Spleen (tissue), 13 donors: ENCODE measurements at regions of chr16 and their contacts with region 1.

Region 1: DNA sequence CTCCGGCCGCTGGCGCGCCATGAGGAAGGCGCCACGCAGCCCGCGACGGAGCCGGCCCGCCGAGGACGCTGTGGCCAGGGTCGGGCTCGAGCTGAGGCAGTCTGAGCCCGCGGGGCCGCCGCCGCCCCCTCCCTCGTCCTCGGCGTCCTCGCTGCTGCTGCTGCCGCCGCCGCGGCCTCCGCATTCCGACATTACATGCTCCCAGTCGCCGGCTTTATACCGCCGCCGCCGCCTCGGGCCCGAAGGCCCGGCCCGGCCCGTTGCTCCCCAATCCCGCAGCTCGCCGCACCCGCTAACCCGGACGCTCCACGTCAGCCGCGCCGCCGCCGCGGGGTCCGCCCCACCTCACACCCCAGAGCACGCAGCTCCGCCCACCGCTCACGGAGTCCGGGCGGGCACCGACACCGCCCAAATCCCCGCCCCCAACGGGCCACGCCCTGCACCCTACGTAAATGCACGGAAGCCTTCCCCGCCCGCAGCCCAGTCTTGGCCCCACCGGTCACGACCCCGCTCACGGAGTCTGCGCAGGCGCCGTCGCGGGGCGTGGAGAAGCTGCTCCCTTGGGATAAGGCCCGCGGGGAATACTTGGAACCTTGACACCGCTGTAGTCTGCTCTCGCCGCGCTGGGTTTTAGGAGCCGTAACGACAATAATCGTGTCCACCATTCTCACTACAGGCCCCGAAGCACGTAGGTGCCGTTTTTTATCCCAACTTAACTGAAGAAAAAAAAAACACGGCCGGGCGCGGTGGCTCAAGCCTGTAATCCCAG is at the start of gene TXNDC11:
- DNase-seq: peak; percentile 100
- H3K4me3 ChIP-seq: peak within 1 kb of the TSS; percentile 62 to 90 (median 87)
- H3K27ac ChIP-seq: peak within 1 kb of the TSS; percentile 96 to 99 (median 98)
- H3K4me1 ChIP-seq: peaks cover 21 to 58% (median 51%) of the 10 kb centered on the region in 6 donors
- H3K27me3 ChIP-seq: no peaks in the 10 kb centered on the region
- CTCF ChIP-seq: peak in 1 of 11 experiments; percentile 11
- POLR2A ChIP-seq: peak; percentile 63 to 95 (median 63)
- total RNA-seq, gene TXNDC11: 42.7 to 104 (median 64.0) TPM

Region 2: DNA sequence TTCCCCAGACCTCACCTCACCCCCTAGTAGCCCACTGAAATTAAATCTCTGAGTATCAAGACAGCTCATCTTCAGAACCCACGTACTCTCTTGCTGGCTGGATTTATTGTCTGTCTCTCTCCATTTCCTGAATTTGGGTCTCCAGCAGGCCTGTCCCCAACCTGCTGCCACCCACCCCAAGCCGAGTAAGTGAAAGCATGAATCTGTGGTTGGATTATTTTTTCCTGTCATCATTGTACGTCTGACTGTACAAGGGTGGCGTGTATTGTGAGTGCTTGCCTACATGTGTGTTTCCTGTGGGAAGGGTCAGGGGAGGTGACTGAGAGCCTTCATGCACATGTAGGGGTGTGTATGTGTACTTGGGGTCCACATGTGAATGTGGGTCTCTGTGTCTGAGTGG is 479.0 kb before region 1 on chr16:
- intact Hi-C with region 1: no loop called
- DNase-seq: no peak
- H3K4me3 ChIP-seq: no peak overlapping the region
- H3K27ac ChIP-seq: peak overlapping the region in 1 of 8 donors; percentile 30
- H3K4me1 ChIP-seq: peaks cover 8 to 28% (median 15%) of the 10 kb centered on the region in 6 donors
- H3K27me3 ChIP-seq: no peaks in the 10 kb centered on the region
- CTCF ChIP-seq: no peak
- POLR2A ChIP-seq: no peak

Region 3: DNA sequence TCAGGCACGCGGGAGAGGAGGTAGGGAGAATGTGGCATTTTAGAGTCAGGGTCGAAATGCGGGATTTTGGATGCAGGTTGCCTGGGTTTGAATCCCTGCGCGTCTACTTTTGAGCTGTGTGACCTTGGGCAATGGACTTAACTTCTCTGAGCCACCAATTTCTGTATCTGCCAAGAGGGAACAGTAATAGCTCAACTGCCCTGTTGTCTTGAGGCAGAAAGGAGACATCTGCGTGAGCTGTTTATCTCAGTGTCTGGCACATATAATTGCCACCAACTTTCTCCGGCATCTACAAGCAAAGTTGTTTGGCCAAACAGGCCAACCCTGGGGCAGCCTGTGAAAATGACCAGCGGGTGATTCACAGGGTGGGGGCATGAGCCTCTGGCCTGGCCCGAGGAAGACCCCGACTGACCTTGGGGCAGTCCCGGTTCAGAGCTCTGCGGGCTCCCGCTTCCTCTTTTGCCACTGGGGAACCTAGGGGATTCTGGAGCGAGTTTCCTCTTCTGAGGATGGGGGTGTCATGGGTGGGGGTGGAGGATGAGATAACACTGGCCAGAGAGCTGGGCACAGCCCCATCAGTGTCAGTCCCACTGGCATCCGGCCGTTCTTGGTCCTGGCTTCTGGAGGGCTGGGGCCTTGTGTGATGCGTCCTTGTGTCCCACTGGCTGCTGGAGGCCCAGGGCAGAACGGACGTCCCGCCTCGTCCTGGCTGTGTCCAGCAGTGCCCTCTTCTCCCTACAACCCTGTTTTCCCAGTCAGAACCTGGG is 73.2 kb before region 1 on chr16:
- intact Hi-C with region 1: no loop called
- DNase-seq: peak; percentile 91
- H3K4me3 ChIP-seq: peak overlapping the region; percentile 64 to 96 (median 84)
- H3K27ac ChIP-seq: peak overlapping the region; percentile 78 to 93 (median 90)
- H3K4me1 ChIP-seq: peaks cover 56 to 94% (median 77%) of the 10 kb centered on the region in 6 donors
- H3K27me3 ChIP-seq: no peaks in the 10 kb centered on the region
- CTCF ChIP-seq: no peak
- POLR2A ChIP-seq: no peak

Region 4: DNA sequence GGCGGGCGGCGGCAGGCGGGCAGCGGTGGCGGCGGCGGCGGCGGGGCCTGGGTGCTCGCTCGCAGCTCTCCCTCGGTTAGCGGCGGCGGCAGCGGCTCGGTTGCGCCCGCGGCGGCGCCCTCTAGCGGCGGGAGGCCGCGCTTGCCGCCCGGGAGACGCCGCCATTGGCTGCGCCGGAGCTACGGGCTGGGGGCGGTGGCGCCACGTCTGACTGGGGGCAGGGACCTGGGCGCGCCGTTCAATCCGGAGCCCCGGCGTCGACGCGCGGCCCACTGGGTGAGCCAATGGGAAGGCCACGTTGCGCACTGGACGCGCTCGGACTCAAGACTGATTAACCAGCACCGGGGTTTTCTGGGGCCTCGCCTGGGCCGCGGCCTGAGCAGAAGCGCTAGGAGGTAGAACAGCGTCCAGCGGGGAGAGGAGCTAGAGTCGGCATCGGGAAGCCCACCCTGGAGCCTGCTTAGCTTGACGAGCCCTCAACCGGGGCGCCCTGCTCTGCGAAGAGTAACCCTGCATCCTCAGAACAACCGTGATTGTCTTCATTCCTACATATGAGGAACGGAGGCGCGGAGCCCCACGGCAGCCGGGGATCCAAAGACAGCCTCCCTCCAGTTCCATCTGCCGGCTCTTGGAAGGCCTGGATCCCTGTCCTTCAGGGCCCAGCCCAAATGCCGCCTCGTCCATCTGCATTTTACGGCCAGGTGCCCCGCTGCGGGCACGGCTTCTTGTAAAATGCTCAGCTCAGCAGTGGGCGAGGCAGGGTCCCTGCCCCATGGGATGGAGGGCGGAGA is 54.6 kb after region 1 on chr16 and contains the start of gene ZC3H7A:
- intact Hi-C with region 1: loop called (anchors 10 kb)
- DNase-seq: peak; percentile 99
- H3K4me3 ChIP-seq: peak within 1 kb of the TSS; percentile 64 to 86 (median 75)
- H3K27ac ChIP-seq: peak within 1 kb of the TSS; percentile 94 to 99 (median 98)
- H3K4me1 ChIP-seq: peaks cover 47 to 75% (median 69%) of the 10 kb centered on the region in 6 donors
- H3K27me3 ChIP-seq: no peaks in the 10 kb centered on the region
- CTCF ChIP-seq: peak; percentile 50 to 99 (median 95)
- POLR2A ChIP-seq: peak; percentile 64 to 93 (median 69)
- total RNA-seq, gene ZC3H7A: 77.1 to 118 (median 90.3) TPM